Transverse colon (tissue), 4 donors: ENCODE measurements at regions of chr1 and their contacts with region 1.

Region 1: DNA sequence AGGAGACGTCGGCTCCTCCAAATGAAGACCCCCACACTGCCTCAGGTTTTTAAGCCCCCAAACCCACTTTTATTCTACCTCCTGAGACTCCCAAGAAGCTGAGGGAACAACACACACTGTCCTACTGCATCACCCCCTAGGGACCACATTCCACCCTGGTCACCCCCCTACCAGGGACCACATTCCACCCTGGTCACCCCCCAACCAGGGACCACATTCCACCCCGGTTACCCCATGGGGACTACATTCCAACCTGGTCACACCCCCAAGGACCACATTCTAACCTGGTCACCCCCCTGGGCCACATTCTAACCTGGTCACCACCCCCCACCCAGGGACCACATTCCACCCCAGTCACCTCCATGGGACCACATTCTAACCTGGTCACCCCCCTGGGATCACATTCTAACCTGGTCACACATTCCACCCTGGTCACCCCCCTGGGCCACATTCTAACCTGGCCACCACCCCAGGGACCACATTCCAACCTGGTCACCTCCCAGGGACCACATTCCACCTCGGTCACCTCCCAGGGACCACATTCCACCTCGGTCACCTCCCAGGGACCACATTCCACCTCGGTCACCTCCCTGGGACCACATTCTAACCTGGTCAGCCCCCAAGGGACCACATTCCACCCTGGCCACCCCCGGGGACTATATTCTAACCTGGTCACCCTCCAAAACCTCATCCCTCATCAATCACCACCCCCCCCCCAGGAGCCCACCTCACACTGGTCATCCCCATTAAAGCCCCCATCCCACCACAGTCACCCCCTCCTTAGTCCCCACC is 587.6 kb downstream of the NPHP4 start:
- DNase-seq: no peak
- H3K4me3 ChIP-seq: no peak overlapping the region
- H3K27ac ChIP-seq: no peak overlapping the region
- H3K4me1 ChIP-seq: no peaks in the 10 kb centered on the region
- H3K27me3 ChIP-seq: no peaks in the 10 kb centered on the region
- CTCF ChIP-seq: no peak
- EP300 ChIP-seq: no peak
- POLR2A ChIP-seq: no peak

Region 2: GRCh38 chr1:6317098-6317760 is 912.6 kb after region 1 on chr1:
- in situ Hi-C with region 1: no loop called
- intact Hi-C with region 1: loop called (anchors 10 kb)
- DNase-seq: no peak
- H3K4me3 ChIP-seq: no peak overlapping the region
- H3K27ac ChIP-seq: no peak overlapping the region
- H3K4me1 ChIP-seq: no peaks in the 10 kb centered on the region
- H3K27me3 ChIP-seq: no peaks in the 10 kb centered on the region
- CTCF ChIP-seq: no peak
- EP300 ChIP-seq: no peak
- POLR2A ChIP-seq: no peak